A549 (cell line): ENCODE measurements at regions of chr3 and their contacts with region 1.

Region 1: DNA sequence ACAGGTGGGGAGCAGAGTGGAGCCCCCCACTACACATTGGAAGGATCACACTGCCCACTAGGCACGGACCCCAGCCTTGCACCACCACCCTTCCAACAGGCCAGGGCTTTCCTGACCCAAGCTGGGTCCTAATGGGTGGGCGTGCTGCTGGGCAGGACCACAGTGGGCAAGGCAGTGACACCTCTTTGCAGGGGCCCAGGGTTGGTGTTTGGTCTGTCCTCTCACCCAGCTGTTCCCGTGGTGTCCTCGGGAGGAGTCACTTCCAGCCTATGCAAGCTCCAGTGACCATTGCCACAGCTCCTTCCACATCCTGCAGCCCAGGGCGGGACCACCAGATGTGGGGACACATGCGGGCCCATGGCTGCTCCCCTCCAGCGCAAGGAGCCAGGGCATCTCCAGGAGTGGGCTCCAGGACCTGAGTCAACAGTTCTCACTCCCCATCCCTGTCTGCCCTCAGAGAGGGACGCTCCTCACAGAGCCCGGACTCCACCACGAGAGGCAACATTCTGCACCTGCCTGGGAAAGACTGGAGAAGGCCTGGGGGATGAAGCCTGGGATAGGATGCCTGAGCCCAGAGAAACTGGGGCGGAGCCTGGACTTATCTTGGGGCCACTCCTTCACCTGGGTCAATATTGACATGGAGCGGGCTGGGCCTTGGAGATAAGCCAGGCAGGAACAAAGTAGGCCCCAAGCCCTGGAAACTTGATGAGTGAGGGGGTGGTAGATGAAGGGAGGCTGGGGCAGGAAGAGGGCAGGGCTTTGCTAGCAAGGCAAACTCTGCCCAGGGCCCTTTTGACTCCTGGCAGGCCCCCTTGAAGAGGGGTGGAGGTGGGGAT is 3.9 kb upstream of the VILL start:
- DNase-seq: peak in 1 of 2 experiments; percentile 65
- ATAC-seq: peak in 1 of 2 experiments; percentile 61; a peak in 3 of 6 replicates
- H3K4me3 ChIP-seq: no peak overlapping the region
- H3K27ac ChIP-seq: peak overlapping the region; percentile 53 to 64; a peak in 5 of 6 replicates
- H3K4me1 ChIP-seq: peaks cover 14% of the 10 kb centered on the region
- CTCF ChIP-seq: no peak
- EP300 ChIP-seq: no peak
- POLR2A ChIP-seq: no peak
- RAD21 ChIP-seq: no peak

Region 2: GRCh38 chr3:37996785-37997301 is 10.1 kb after region 1 on chr3:
- CTCF ChIA-PET with region 1: interaction called, 28 read pairs
- POLR2A ChIA-PET with region 1: no interaction called
- DNase-seq: peak; percentile 86 to 90
- ATAC-seq: peak; percentile 44 to 78; a peak in 4 of 6 replicates
- H3K4me3 ChIP-seq: no peak overlapping the region
- H3K27ac ChIP-seq: no peak overlapping the region
- H3K4me1 ChIP-seq: peaks cover 11% of the 10 kb centered on the region
- CTCF ChIP-seq: peak; percentile 68
- EP300 ChIP-seq: no peak
- POLR2A ChIP-seq: no peak
- RAD21 ChIP-seq: peak; percentile 28 to 41; a peak in 4 of 5 replicates